ENCODE measurements at regions of chr6 and their contacts with region 1.

Region 1: DNA sequence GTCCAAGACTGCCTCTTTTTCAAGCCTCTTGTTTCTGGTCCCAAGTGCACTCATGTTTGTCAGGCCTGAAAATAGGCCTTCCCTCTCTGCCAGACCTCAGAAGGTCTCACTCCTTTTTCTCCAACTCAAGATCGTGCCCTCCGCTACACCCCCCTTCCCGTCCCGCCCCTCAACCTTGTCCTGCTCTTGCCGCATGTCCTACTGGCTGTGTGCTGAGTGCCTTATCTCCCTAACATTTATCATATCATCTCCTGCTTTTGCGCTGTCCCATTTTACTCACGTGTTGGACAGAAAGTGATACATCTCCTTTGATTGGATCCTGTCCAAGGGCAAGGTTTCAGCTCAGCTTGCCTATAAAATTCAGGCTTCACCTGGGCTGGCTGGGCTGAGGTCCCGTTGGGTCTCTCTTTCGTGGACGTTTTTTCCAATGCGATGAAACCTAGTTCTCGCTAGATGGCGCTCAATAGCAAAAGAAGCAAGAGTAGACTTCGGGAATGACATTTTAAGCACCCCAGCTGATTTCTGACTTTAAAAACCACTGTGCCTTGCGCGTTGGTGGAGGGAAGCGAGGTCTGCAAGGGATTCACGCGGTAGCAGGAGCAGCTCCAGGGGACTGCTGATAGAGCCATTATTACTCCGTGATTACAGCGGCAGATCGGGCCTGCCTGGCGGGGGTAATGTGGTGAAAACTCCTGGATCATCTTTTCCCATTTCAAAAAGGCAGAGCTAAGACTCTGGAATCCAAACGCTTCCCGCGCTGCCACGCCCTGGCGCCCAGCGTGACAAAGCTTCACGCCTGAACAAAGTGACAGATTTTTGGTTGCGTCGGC is 137.6 kb downstream of the IMPG1 start:
- H3K4me3 ChIP-seq: peak overlapping the region; percentile 41
- H3K27ac ChIP-seq: no peak overlapping the region
- H3K4me1 ChIP-seq: no peaks in the 10 kb centered on the region
- CTCF ChIP-seq: peak; percentile 65; the same call in 1 of the 2 replicates

Region 2: DNA sequence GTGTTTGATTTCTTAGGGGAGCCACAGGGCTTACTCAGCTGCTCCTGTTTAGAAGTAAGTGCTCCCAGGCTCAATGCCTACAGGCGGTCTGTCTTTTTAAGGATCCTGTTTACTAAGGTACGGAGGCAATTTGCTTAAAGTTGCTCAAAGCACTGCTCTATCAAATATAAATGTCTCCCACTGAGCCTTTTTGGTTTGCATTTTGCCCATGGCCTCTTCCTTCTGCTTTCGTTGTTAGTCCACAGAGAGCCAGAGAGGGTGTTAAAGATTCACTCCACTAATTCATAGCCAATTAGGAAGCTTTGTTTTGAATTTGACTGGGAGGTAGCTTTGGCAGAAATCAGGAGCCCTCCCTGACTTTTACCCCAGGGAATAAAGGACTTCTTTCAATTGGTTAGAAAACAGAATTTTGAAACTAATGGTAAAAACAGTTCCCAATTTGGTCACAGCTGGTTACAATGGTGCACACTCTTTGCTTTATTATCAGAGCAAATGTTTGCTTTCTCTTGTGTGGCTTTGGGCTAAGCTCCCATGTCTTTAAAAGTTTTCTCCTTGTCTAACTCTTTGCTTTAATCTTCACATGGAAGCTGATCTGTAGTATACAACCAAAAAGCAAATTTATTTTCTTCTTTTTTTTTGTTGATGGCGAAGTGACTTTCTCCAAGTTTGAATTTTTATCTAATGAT is 11.4 kb after region 1 on chr6:
- CTCF ChIA-PET with region 1: interaction called, 16 read pairs
- POLR2A ChIA-PET with region 1: interaction called, 3 read pairs
- H3K4me3 ChIP-seq: no peak overlapping the region
- H3K27ac ChIP-seq: no peak overlapping the region
- H3K4me1 ChIP-seq: no peaks in the 10 kb centered on the region
- CTCF ChIP-seq: no peak

Region 3: DNA sequence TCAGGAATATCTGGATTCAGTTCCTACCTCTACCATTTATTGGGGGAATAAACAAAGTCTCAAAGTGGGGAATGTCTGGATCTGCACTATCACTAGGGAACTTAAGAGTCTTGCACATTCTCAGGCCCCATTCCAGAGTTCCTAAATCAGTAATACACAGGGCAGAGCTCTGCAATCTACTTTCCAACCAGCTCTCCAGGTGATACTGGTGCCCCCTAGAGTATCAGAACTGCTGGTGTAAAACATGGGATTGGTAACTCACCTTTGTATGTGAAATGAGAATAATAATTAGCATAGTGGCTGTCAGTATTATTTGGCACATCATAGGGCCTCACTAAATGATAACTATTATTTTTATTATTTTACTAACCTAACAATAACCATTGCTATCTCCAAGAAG is 416.4 kb after region 1 on chr6:
- CTCF ChIA-PET with region 1: interaction called, 11 read pairs
- POLR2A ChIA-PET with region 1: no interaction called
- H3K4me3 ChIP-seq: no peak overlapping the region
- H3K27ac ChIP-seq: no peak overlapping the region
- H3K4me1 ChIP-seq: no peaks in the 10 kb centered on the region
- CTCF ChIP-seq: no peak

Region 4: GRCh38 chr6:76861403-76861802 is 926.5 kb after region 1 on chr6:
- CTCF ChIA-PET with region 1: interaction called, 13 read pairs
- POLR2A ChIA-PET with region 1: no interaction called
- H3K4me3 ChIP-seq: no peak overlapping the region
- H3K27ac ChIP-seq: no peak overlapping the region
- H3K4me1 ChIP-seq: no peaks in the 10 kb centered on the region
- CTCF ChIP-seq: no peak

Measured in HEK293 (cell line).